ENCODE measurements at regions of chr2 and their contacts with region 1.

Region 1: DNA sequence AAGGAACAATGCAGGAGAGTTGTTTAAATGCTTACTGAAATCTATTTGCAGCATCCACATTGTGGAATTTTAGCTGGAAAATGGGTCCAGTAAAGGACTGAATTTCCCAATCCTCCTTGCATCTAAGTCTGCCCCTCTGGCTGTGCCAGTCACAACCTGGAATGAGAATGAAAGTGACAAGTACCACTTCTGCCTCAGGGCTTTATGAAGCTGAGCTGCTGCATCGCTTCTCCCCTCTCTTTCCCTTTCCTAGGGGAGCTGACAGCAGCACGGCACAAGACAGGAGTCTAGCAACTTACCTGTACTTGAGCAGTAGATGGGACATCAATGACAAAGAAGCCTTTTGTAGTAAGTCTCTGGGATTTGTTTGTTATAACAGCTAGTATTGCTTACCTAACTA is 27.3 kb upstream of the THSD7B start:
- DNase-seq: no peak
- H3K4me3 Mint-ChIP-seq: no peak overlapping the region
- H3K27ac Mint-ChIP-seq: no peak overlapping the region
- H3K4me1 Mint-ChIP-seq: no peaks in the 10 kb centered on the region
- H3K27me3 Mint-ChIP-seq: no peaks in the 10 kb centered on the region
- CTCF ChIP-seq: no peak

Region 2: DNA sequence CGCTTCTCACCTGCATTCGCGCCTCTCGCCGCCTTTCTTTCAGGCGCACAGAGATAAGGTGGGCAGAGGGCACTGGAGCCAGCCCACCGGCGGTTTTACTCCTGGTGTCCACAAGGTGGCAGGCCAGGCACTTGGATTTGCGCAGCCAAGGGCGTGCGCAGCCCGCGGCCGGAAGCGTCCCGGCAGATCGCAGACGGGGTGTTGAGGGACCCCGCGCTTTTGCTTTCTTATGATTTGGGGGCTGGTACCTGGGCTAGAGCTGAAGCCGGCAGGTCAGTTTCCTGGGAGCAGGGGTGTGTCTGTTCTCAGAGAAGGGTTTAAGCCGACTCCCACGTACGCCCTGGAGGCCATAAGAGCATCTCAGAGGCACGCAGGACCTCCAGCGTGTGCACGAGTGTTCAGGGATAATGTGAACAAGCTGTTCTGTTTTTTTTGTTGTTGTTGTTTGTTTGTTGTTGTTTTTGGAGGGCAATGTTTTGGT is 314.5 kb before region 1 on chr2:
- CTCF ChIA-PET with region 1: no interaction called
- intact Hi-C with region 1: loop called (anchors 10 kb)
- DNase-seq: peak; percentile 82
- H3K4me3 Mint-ChIP-seq: peak overlapping the region; percentile 77
- H3K27ac Mint-ChIP-seq: no peak overlapping the region
- H3K4me1 Mint-ChIP-seq: peaks cover 9% of the 10 kb centered on the region
- H3K27me3 Mint-ChIP-seq: peaks cover 36% of the 10 kb centered on the region
- CTCF ChIP-seq: peak; percentile 91

Region 3: GRCh38 chr2:136863874-136864273 is 125.8 kb after region 1 on chr2:
- CTCF ChIA-PET with region 1: no interaction called
- intact Hi-C with region 1: no loop called
- DNase-seq: no peak
- H3K4me3 Mint-ChIP-seq: no peak overlapping the region
- H3K27ac Mint-ChIP-seq: no peak overlapping the region
- H3K4me1 Mint-ChIP-seq: no peaks in the 10 kb centered on the region
- H3K27me3 Mint-ChIP-seq: no peaks in the 10 kb centered on the region
- CTCF ChIP-seq: no peak

Measured in Calu3 (cell line).